Ascending aorta (tissue), 2 donors: ENCODE measurements at regions of chr4 and their contacts with region 1.

Region 1: GRCh38 chr4:2468445-2469192 is at the start of gene RNF4:
- DNase-seq: peak; percentile 86 to 98
- H3K4me3 ChIP-seq: peak within 1 kb of the TSS; percentile 84 to 95
- H3K27ac ChIP-seq: peak within 1 kb of the TSS; percentile 81 to 91
- H3K4me1 ChIP-seq: peaks cover 3 to 18% of the 10 kb centered on the region in 2 donors
- H3K27me3 ChIP-seq: no peaks in the 10 kb centered on the region
- CTCF ChIP-seq: no peak
- total RNA-seq, gene RNF4: 19.3 TPM

Region 2: GRCh38 chr4:2241410-2242353 is 226.9 kb before region 1 on chr4 and contains the starts of genes HAUS3 and POLN:
- intact Hi-C with region 1: loop called (anchors 5 kb)
- DNase-seq: peak; percentile 90 to 99
- H3K4me3 ChIP-seq: peak within 1 kb of the TSS; percentile 65 to 97
- H3K27ac ChIP-seq: peak within 1 kb of the TSS; percentile 60 to 69
- H3K4me1 ChIP-seq: peaks cover 6 to 37% of the 10 kb centered on the region in 2 donors
- H3K27me3 ChIP-seq: no peaks in the 10 kb centered on the region
- CTCF ChIP-seq: no peak
- total RNA-seq, gene HAUS3: 9.0 TPM
- total RNA-seq, gene POLN: 0.21 TPM

Region 3: DNA sequence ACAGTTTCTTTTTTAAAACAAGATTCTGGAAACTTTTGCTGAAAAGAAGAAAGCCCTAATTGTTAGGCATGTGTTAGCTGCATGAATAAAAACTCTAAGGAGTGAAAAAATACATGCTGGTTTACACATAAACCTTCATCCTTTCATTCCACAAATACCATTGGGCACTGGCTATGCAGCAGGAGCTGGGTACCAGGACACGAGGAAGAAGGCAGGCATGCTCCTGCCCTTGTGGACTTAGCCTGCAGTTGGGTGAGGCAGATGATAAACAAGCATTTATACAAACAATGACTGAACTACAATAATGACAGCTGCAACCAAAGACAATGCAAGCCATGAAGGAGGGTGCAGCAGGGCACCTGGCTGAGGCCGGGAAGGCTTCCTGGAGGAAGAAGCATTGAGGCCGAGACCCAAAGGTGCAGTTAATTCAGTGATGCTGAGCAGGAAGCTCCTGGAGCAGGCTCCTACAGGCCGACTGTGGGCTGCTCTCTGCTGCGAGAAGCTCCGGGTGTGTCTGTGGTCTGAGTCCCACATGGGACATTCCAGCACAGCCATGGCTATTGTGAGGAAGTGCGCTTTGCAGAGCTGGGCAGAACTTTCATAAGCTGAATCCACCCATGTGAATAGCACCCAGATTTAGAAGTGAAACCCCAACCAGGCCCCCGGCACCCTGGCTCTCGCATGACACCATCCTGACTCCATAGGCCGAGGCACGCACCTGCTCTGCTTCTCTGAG is 162.7 kb before region 1 on chr4:
- intact Hi-C with region 1: no loop called
- DNase-seq: no peak
- H3K4me3 ChIP-seq: no peak overlapping the region
- H3K27ac ChIP-seq: no peak overlapping the region
- H3K4me1 ChIP-seq: no peaks in the 10 kb centered on the region
- H3K27me3 ChIP-seq: no peaks in the 10 kb centered on the region
- CTCF ChIP-seq: no peak

Region 4: GRCh38 chr4:2526559-2526958 is 57.9 kb after region 1 on chr4:
- intact Hi-C with region 1: no loop called
- DNase-seq: no peak
- H3K4me3 ChIP-seq: no peak overlapping the region
- H3K27ac ChIP-seq: no peak overlapping the region
- H3K4me1 ChIP-seq: no peaks in the 10 kb centered on the region
- H3K27me3 ChIP-seq: no peaks in the 10 kb centered on the region
- CTCF ChIP-seq: no peak

Region 5: DNA sequence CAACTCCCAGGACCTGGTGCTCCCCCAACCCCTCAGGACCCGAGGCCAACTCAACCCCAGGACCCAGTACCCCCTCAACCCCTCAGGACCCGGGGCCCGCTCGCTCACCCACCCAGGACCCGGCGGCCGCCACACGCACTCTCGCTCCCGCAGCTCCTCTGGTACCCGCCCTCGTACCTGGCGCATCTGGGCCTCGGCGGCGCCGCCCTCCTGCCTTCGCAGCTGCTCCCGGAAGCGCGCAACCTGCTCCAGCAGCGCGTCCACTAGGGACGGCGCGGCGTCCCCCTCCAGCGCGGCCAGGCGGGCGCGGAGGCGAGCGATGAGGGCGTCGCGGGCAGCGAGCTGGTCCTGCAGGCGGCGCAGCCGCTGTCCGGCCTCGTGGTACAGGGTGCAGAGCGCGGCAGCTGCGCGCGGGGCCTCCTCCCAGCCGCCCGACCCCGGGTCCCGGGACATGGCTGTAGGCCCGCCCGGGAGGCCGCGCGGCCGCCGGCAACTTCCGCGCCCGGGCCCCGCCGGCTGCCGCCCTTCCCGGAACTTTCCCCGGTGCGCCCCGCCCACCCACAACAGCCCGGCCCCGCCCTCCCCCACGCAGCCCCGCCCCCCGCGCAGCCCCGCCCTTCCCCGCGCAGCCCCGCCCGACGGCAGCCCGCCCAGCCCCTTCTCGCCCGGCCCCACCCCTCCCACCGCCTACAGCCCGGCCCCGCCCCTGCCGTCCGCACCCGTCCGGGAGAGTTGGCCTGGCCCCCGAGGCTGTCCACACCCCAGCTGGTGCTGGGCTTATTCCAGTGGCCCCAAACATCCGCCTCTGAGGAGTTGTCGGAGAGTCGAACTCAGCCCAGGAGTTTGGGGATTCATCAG is 287.4 kb after region 1 on chr4 and contains the start of gene TNIP2:
- intact Hi-C with region 1: loop called (anchors 2 kb)
- DNase-seq: peak in 1 of 2 donors; percentile 92
- H3K4me3 ChIP-seq: peak within 1 kb of the TSS; percentile 90 to 95
- H3K27ac ChIP-seq: peak within 1 kb of the TSS; percentile 82 to 87
- H3K4me1 ChIP-seq: peaks cover 4 to 10% of the 10 kb centered on the region in 2 donors
- H3K27me3 ChIP-seq: no peaks in the 10 kb centered on the region
- CTCF ChIP-seq: peak; percentile 11 to 59 (median 28)
- total RNA-seq, gene TNIP2: 65.6 TPM

Region 6: DNA sequence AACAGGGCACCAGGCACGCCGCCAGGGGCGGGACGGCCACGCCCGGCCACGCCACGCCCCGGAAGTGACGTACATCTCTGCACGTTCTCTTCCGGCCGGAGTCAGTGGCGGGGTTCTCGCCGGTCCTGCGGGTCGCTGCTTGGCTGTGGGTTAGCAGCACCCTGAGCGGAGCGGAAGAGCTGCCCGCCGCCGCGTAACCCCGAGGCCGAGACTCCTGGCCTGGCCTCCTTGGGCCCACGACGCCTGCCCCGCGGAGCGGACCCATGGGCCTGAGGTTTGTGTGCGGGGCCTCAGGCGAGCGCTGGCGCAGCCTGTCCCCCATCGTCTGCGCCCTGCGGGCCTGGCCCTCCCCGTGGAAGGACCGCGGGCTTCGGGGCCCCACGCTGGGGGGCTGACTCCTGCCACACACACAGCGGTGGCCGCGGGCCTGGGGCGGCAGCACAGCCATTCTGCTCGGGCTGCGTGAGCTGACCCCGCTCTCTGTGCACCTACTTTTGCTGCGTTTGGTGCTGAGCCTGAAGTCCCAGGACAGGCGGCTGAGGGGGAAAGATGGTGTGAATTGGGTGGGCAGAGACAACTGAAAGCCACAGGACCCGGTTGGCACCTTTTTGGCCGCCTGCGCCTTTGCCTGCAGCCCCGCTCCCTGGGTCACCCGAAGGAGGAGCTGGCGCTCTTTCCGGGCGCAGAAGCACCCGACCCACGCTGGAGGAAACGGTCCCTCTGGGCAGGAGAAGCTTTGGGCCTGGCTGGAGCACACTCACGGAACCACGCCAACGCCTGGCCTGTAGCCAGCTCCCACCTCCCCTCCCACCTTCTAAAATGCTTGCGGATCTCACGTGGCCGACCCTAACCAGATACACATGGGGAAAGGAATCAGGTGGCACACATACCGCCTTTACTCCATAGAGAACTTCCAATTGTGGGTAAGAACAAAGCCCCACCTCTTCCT is 466.5 kb after region 1 on chr4:
- intact Hi-C with region 1: loop called (anchors 10 kb)
- DNase-seq: peak; percentile 72 to 95
- H3K4me3 ChIP-seq: peak overlapping the region; percentile 59 to 76
- H3K27ac ChIP-seq: peak overlapping the region; percentile 77 to 79
- H3K4me1 ChIP-seq: peaks cover 0 to 21% of the 10 kb centered on the region in 2 donors
- H3K27me3 ChIP-seq: no peaks in the 10 kb centered on the region
- CTCF ChIP-seq: no peak